ENCODE measurements at regions of chr10 and their contacts with region 1.

Region 1: GRCh38 chr10:110210674-110211464 is 3.5 kb downstream of the MXI1 start:
- DNase-seq: peak; percentile 99
- H3K4me3 Mint-ChIP-seq: peak overlapping the region; percentile 84
- H3K27ac Mint-ChIP-seq: peak overlapping the region; percentile 88
- H3K4me1 Mint-ChIP-seq: peaks cover 22% of the 10 kb centered on the region
- H3K27me3 Mint-ChIP-seq: no peaks in the 10 kb centered on the region
- CTCF ChIP-seq: no peak

Region 2: DNA sequence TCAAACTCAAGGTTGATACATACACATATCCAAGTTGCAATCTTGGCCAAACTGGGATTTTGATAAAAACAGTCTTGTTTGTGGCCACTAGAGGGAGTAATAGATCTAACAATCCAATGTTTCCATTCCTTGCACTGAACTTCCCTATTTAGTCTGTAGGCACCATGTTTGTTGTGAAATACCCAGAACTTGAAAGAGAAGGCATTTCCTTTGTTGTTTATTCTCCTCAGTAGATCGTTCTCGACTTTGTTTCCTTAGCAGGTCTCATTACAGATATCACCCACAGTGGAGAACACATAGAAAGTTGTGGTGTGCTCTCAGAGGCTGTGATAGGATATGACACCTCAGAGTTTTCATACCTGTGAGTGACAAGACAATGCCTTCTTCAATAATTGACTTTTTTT is 73.7 kb before region 1 on chr10:
- CTCF ChIA-PET with region 1: interaction called, 45 read pairs
- POLR2A ChIA-PET with region 1: interaction called, 59 read pairs
- intact Hi-C with region 1: loop called (anchors 1 kb)
- DNase-seq: peak; percentile 74
- H3K4me3 Mint-ChIP-seq: no peak overlapping the region
- H3K27ac Mint-ChIP-seq: peak overlapping the region; percentile 58
- H3K4me1 Mint-ChIP-seq: peaks cover 14% of the 10 kb centered on the region
- H3K27me3 Mint-ChIP-seq: no peaks in the 10 kb centered on the region
- CTCF ChIP-seq: peak; percentile 64

Region 3: DNA sequence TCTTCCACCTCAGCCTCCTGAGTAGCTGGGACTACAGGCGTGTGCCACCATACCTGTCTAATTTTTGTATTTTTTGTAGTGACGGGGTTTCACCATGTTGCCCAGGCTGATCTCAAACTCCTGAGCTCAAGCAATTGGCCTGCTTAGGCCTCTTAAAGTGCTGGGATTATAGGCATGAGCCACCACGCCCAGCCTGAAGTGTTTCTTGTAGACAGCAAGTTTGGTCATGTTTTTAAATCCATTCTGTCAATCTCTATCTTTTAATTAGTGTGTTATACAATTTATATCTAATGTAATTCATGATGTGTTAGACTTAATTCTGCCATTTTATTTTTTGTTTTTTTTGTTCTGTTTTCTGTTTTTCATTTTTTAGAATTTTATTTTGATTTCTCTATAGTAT is 20.7 kb before region 1 on chr10:
- CTCF ChIA-PET with region 1: interaction called, 5 read pairs
- POLR2A ChIA-PET with region 1: interaction called, 23 read pairs
- intact Hi-C with region 1: no loop called
- DNase-seq: no peak
- H3K4me3 Mint-ChIP-seq: no peak overlapping the region
- H3K27ac Mint-ChIP-seq: no peak overlapping the region
- H3K4me1 Mint-ChIP-seq: peaks cover 7% of the 10 kb centered on the region
- H3K27me3 Mint-ChIP-seq: no peaks in the 10 kb centered on the region
- CTCF ChIP-seq: no peak

Region 4: GRCh38 chr10:110233846-110234245 is 23.0 kb after region 1 on chr10:
- CTCF ChIA-PET with region 1: interaction called, 4 read pairs
- POLR2A ChIA-PET with region 1: interaction called, 11 read pairs
- intact Hi-C with region 1: no loop called
- DNase-seq: no peak
- H3K4me3 Mint-ChIP-seq: no peak overlapping the region
- H3K27ac Mint-ChIP-seq: no peak overlapping the region
- H3K4me1 Mint-ChIP-seq: no peaks in the 10 kb centered on the region
- H3K27me3 Mint-ChIP-seq: no peaks in the 10 kb centered on the region
- CTCF ChIP-seq: no peak

Region 5: DNA sequence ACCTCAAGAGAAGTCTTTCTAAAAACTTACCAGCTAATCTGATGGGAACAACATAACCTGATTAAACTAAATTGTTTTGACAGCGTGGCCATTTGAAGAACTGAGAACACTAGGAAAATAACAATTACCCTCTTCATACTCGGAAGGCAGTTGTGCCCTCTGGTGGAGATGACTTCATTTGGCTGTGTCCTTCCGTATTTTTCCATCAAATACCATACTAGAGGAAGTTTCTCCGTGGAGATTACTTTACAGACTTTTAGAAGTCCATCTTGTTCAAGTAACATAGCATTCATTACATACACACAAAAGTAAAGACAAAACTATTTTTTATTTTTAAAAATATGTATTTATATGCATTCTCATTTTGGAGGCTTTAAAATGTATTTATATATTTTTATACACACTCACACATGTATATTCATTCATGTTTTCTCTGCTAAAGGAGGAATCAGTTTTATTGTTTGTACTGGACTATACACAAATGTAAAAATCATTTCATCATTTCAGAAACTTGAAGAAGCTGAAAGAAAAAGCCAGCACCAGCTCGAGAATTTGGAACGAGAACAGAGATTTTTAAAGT is 68.6 kb after region 1 on chr10:
- CTCF ChIA-PET with region 1: interaction called, 13 read pairs
- POLR2A ChIA-PET with region 1: interaction called, 30 read pairs
- intact Hi-C with region 1: loop called (anchors 1 kb)
- DNase-seq: peak; percentile 71
- H3K4me3 Mint-ChIP-seq: no peak overlapping the region
- H3K27ac Mint-ChIP-seq: no peak overlapping the region
- H3K4me1 Mint-ChIP-seq: no peaks in the 10 kb centered on the region
- H3K27me3 Mint-ChIP-seq: no peaks in the 10 kb centered on the region
- CTCF ChIP-seq: peak; percentile 80

Region 6: DNA sequence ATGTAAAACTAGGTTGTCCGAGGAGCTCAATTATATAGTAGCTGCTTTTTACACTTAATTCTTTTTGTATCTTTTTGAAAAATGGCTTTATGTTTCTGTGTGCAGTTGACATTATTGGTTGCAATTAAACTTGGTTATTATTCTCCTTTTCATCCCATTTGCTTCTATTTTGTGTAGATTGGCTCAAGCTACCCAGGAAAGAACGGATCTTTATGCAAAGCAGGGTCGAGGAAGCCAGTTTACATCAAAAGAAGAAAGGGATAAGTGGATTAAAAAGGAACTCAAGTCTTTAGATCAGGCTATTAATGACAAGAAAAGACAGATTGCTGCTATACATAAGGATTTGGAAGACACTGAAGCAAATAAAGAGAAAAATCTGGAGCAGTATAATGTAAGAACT is 373.1 kb after region 1 on chr10:
- CTCF ChIA-PET with region 1: no interaction called
- POLR2A ChIA-PET with region 1: no interaction called
- intact Hi-C with region 1: no loop called
- DNase-seq: no peak
- H3K4me3 Mint-ChIP-seq: no peak overlapping the region
- H3K27ac Mint-ChIP-seq: no peak overlapping the region
- H3K4me1 Mint-ChIP-seq: no peaks in the 10 kb centered on the region
- H3K27me3 Mint-ChIP-seq: no peaks in the 10 kb centered on the region
- CTCF ChIP-seq: no peak

Measured in MCF 10A (cell line).